ENCODE measurements at regions of chr3 and their contacts with region 1.

Region 1: GRCh38 chr3:108090701-108091451 is at the start of gene CD47:
- DNase-seq: peak; percentile 87
- ATAC-seq: peak; percentile 92
- H3K4me3 ChIP-seq: peak within 1 kb of the TSS; percentile 99
- H3K27ac ChIP-seq: peak within 1 kb of the TSS; percentile 95
- H3K4me1 ChIP-seq: peaks cover 3% of the 10 kb centered on the region; the same call in 1 of the 2 replicates
- H3K27me3 ChIP-seq: no peaks in the 10 kb centered on the region
- CTCF ChIP-seq: no peak
- POLR2A ChIP-seq: peak; percentile 84
- RAD21 ChIP-seq: no peak
- total RNA-seq, gene CD47: 52.0 and 110 TPM in 2 replicates

Region 2: GRCh38 chr3:107660306-107660976 is 430.4 kb before region 1 on chr3:
- CTCF ChIA-PET with region 1: no interaction called
- POLR2A ChIA-PET with region 1: interaction called, 16 read pairs
- dilution Hi-C with region 1: no loop called
- in situ Hi-C with region 1: no loop called
- intact Hi-C with region 1: loop called (anchors 10 kb)
- DNase-seq: peak; percentile 77
- ATAC-seq: peak; percentile 41
- H3K4me3 ChIP-seq: no peak overlapping the region
- H3K27ac ChIP-seq: peak overlapping the region; percentile 31; the same call in 1 of the 2 replicates
- H3K4me1 ChIP-seq: peaks cover 5% of the 10 kb centered on the region
- H3K27me3 ChIP-seq: no peaks in the 10 kb centered on the region
- CTCF ChIP-seq: peak; percentile 75
- POLR2A ChIP-seq: no peak
- RAD21 ChIP-seq: peak; percentile 59

Region 3: GRCh38 chr3:108130701-108131474 is 40.0 kb after region 1 on chr3:
- CTCF ChIA-PET with region 1: no interaction called
- POLR2A ChIA-PET with region 1: no interaction called
- dilution Hi-C with region 1: no loop called
- in situ Hi-C with region 1: no loop called
- intact Hi-C with region 1: loop called (anchors 2 kb)
- DNase-seq: peak; percentile 96
- ATAC-seq: peak; percentile 79
- H3K4me3 ChIP-seq: no peak overlapping the region
- H3K27ac ChIP-seq: peak overlapping the region; percentile 95; the same call in 1 of the 2 replicates
- H3K4me1 ChIP-seq: peaks cover 26% of the 10 kb centered on the region
- H3K27me3 ChIP-seq: no peaks in the 10 kb centered on the region
- CTCF ChIP-seq: no peak
- POLR2A ChIP-seq: no peak
- RAD21 ChIP-seq: no peak; the same call in 1 of the 2 replicates

Region 4: GRCh38 chr3:108171106-108171505 is 80.2 kb after region 1 on chr3:
- CTCF ChIA-PET with region 1: no interaction called
- POLR2A ChIA-PET with region 1: no interaction called
- dilution Hi-C with region 1: no loop called
- in situ Hi-C with region 1: no loop called
- intact Hi-C with region 1: no loop called
- DNase-seq: no peak
- ATAC-seq: no peak
- H3K4me3 ChIP-seq: no peak overlapping the region
- H3K27ac ChIP-seq: no peak overlapping the region
- H3K4me1 ChIP-seq: peaks cover 4% of the 10 kb centered on the region; the same call in 1 of the 2 replicates
- H3K27me3 ChIP-seq: no peaks in the 10 kb centered on the region
- CTCF ChIP-seq: no peak
- POLR2A ChIP-seq: no peak
- RAD21 ChIP-seq: no peak

Region 5: DNA sequence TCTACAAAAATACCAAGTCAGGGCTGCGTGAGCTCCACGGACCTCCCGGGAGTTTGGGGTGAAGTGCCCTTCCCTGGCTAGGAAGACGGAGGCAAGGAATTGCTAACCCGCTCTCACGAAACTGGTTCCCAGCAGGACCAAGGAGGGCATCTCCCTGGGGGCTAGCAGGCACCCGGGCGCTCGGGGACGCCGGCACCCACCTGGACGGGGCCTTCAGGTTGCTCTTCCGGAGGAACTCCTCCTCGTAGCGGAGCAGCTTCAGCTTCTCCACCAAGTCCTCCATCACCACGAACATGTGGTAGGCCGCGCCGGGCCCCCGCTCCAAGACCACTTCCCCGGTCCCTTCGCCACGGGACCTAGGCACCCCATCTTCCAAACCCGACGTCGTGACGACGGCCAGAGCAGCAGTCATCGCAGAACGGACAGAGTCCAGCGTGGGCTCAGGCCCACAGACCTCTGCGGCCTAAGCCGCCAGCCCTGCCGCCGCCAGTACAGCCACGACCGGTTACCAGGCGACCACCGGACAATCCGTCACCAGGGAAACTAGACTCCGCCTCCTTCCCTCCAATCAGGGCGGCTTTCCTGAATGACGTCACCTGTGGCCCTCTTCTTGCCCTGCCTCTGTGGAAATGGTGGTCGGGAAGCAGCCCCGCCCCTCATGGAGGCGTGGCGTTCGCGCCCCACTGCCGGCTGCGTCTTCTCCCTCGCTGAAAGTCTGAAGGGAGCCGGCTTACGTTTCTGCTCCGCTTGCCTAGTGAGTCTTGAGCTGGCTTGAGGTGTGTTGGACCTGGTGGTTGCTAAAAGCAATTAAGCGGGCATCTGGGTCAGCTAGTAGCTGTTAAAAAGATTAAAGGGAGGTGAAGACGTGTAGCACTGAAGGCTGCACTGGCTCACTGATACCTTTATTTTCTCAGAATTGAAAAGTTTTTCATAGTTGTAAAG is 131.3 kb after region 1 on chr3 and contains the start of gene IFT57:
- CTCF ChIA-PET with region 1: no interaction called
- POLR2A ChIA-PET with region 1: no interaction called
- dilution Hi-C with region 1: no loop called
- in situ Hi-C with region 1: no loop called
- intact Hi-C with region 1: loop called (anchors 1 kb)
- DNase-seq: peak; percentile 98
- ATAC-seq: peak; percentile 96
- H3K4me3 ChIP-seq: peak within 1 kb of the TSS; percentile 84
- H3K27ac ChIP-seq: peak within 1 kb of the TSS; percentile 50
- H3K4me1 ChIP-seq: peaks cover 8% of the 10 kb centered on the region
- H3K27me3 ChIP-seq: no peaks in the 10 kb centered on the region
- CTCF ChIP-seq: no peak
- POLR2A ChIP-seq: peak; percentile 92
- RAD21 ChIP-seq: no peak
- total RNA-seq, gene IFT57: 35.3 and 46.9 TPM in 2 replicates

Region 6: DNA sequence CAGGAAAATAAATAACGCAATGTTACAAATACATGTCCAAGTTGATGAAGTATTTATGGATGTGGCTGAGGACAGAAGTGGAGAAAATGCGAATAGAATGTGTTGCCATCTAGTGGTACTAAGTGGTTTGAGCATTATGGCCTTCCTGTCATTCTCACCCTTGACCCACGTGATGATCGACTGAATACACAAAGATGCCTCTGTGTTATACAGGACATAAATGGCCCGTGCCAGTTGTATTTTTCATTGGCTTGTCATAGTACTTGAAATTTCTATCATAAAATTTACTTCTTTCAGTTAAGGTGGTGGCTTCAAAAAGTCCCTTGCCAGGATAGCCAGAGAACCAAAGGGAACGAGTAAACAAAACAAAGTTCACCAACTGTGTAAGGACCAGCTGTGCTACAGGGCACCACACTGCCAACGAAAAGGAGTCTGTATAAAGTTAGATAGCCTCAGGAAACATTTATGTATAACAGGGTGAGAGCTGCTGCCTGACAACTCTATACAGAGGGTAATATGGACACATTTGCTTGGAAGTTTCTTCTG is 315.9 kb after region 1 on chr3:
- CTCF ChIA-PET with region 1: no interaction called
- POLR2A ChIA-PET with region 1: no interaction called
- dilution Hi-C with region 1: no loop called
- in situ Hi-C with region 1: no loop called
- intact Hi-C with region 1: loop called (anchors 5 kb)
- DNase-seq: peak; percentile 56
- ATAC-seq: peak; percentile 85
- H3K4me3 ChIP-seq: no peak overlapping the region
- H3K27ac ChIP-seq: no peak overlapping the region
- H3K4me1 ChIP-seq: no peaks in the 10 kb centered on the region
- H3K27me3 ChIP-seq: no peaks in the 10 kb centered on the region; the same call in 1 of the 2 replicates
- CTCF ChIP-seq: peak; percentile 61
- POLR2A ChIP-seq: no peak
- RAD21 ChIP-seq: peak; percentile 65

Measured in IMR-90 (cell line).